ENCODE measurements at regions of chr17 and their contacts with region 1.

Region 1: DNA sequence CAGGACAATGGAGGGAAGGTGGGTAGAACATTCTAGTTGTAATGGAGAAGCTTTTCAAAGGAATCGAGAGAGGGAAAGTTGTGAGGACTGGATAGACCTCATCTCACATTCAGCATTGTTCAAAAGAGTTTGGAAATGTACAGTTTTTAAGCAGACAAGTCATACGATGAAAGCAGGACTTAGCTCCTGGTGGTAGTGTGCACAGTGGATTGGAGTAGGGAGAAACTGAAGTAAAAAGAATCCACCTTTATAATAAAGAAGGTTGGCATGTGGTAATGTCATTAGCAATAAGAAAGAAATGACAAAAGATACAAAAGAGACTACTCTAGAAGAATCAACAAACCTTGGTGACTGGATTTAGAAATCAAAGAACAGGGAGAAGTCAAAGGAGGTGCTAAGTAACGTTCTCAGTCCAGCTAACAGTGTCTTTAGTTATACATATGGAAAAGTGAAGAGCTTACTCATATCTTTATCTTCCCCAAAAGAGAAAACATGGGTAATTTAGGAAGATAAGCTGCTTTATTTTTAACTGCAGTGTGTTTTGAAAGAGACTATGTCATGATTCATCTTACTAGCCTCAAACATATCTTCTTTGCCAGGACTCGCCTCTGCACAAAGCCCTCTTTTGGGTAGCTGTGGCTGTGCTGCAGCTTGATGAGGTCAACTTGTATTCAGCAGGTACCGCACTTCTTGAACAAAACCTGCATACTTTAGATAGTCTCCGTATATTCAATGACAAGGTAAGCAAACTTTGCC is 18.7 kb upstream of the EVI2A start:
- DNase-seq: no peak
- ATAC-seq: no peak; a peak in 1 of 6 replicates
- H3K4me3 ChIP-seq: no peak overlapping the region
- H3K27ac ChIP-seq: no peak overlapping the region
- H3K4me1 ChIP-seq: no peaks in the 10 kb centered on the region
- CTCF ChIP-seq: no peak
- EP300 ChIP-seq: no peak
- POLR2A ChIP-seq: no peak
- RAD21 ChIP-seq: no peak

Region 2: GRCh38 chr17:31248986-31249834 is 90.9 kb before region 1 on chr17:
- CTCF ChIA-PET with region 1: no interaction called
- POLR2A ChIA-PET with region 1: no interaction called
- DNase-seq: no peak
- ATAC-seq: peak in 1 of 2 experiments; percentile 53; a peak in 3 of 6 replicates
- H3K4me3 ChIP-seq: no peak overlapping the region
- H3K27ac ChIP-seq: peak overlapping the region; percentile 5 to 61; a peak in 4 of 6 replicates
- H3K4me1 ChIP-seq: peaks cover 43% of the 10 kb centered on the region
- CTCF ChIP-seq: no peak
- EP300 ChIP-seq: no peak
- POLR2A ChIP-seq: no peak
- RAD21 ChIP-seq: no peak

Region 3: DNA sequence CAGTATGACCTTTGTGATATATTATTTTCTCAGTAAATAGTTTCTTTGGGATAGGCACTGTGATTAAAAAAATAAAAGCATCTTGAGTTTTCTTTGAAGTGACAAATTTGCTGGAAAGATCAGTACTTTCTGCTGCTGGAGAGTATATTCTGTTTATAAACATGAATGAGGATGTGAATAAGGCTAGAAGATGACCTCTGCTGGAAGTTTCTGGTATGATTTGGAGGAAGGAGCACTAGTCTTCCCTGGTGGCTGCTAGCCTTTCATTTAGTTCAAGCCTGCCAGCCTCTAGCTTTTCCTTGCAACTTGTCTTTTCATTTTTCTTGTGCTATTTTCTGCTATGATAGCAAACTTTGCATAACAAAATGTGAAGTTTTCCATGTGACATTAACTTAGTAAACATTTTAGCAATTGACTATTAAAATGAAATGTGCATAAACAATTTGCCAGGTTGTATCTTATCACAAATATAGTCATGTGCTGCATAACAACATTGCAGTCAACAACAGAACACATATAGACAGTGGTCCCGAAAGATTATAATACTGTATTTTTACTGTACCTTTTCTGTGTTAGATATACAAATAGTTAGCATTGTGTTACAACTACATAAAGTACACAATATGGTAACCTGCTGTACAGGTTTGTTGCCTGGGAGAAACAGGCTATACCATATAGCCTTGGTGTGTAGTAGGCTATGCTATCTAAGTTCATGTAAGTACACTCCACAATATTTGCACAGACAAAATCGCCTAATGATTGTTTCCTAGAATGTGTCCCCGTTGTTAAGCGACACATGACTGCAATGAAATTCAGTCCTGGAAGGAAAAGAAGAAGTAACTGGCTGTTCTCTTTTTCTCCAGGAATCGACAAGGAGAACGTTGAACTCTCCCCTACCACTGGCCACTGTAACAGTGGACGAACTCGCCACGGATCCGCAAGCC is 33.3 kb after region 1 on chr17:
- CTCF ChIA-PET with region 1: interaction called, 11 read pairs
- POLR2A ChIA-PET with region 1: no interaction called
- DNase-seq: peak in 1 of 2 experiments; percentile 72
- ATAC-seq: peak; percentile 96 to 98
- H3K4me3 ChIP-seq: no peak overlapping the region
- H3K27ac ChIP-seq: no peak overlapping the region
- H3K4me1 ChIP-seq: 0 out of 3 replicates have a peak, but pooled peaks cover 4% of the 10 kb centered on the region
- CTCF ChIP-seq: peak; percentile 76
- EP300 ChIP-seq: no peak
- POLR2A ChIP-seq: no peak
- RAD21 ChIP-seq: peak; percentile 69 to 77